Activated T-helper 1 cell treated with anti-CD3 and anti-CD28 coated beads, Interleukin-12 subunit alpha, Interleukin-12 subunit beta, Interleukin-2, Interleukin-4 antibody, amounts not matched to agents 30 ng/mL and 10 ng/mL and 1 ng/mL, durations not matched to agents 14 hours and 24 hours and 36 hours (primary cell): ENCODE measurements at regions of chr9 and their contacts with region 1.

Region 1: GRCh38 chr9:94166237-94166963 is 82.1 kb downstream of the PTPDC1 start:
- DNase-seq: peak; percentile 92
- H3K4me3 Mint-ChIP-seq: peak overlapping the region; percentile 95
- H3K27ac Mint-ChIP-seq: peak overlapping the region; percentile 89
- H3K4me1 Mint-ChIP-seq: peaks cover 46% of the 10 kb centered on the region
- H3K27me3 Mint-ChIP-seq: peaks cover 2% of the 10 kb centered on the region

Region 2: DNA sequence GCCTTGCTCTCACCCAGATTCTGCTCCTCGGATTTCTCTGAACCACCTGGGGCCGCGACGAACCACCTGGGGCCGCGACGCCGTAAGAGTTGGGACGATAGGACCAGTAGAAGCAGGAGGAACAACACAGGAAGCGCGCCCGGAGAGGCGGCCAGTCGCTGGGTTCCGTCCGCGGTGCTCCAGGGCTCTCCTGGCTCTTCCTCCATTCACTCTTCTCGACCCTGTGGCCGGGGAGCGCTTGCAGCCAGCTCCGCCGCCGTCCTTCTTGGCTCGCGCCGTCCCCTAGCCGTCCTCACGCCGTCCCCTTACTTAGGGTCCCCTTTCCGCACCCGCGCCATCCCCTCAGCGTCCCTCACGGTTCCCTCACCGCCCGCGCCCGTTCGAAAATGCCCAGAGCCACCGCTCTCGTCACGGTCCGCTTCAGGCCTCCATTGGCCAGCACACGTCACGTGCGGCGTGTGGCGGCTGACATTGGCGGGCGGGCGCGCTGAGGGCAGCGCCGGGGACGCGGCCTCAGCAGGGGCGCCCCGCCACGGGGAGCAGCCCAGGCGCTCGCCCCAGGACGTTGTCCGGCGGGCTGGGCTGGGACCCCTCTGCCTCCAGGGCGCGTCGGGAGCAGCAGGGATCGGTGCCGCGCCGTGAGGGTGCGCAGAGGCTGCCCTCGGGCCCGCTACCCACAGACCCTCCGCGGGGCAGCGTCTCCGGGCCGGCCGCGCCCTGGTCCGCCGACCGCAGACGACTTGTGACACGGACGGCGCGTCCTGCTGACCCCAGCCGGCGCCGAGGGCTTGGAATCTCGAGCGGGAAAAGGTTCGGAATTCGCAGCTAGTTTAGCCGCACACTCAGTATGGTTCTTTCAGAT is 135.9 kb before region 1 on chr9:
- intact Hi-C with region 1: loop called (anchors 1 kb)
- DNase-seq: peak; percentile 79
- H3K4me3 Mint-ChIP-seq: peak overlapping the region; percentile 99
- H3K27ac Mint-ChIP-seq: peak overlapping the region; percentile 96
- H3K4me1 Mint-ChIP-seq: peaks cover 21% of the 10 kb centered on the region
- H3K27me3 Mint-ChIP-seq: peaks cover 7% of the 10 kb centered on the region

Region 3: DNA sequence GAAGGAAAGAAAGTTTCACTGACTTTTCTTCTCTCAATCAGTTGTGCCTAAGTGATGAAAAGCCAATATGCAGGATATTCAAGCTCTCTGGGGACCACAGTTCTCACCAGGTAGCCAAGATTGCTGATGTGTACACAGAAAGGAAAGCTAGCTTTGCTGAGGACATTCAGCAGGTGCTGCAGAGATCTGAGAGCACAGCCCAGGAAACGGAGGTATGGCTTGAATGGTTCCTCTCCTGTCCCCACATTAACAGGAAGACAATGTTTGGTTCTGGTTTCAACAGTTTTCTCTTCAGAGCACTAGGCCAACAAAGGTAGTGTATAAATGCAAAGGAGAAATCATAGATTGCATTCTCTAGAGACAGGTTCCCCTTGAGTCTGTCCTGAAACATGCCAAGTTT is 12.5 kb before region 1 on chr9:
- intact Hi-C with region 1: no loop called
- DNase-seq: no peak
- H3K4me3 Mint-ChIP-seq: no peak overlapping the region
- H3K27ac Mint-ChIP-seq: no peak overlapping the region
- H3K4me1 Mint-ChIP-seq: peaks cover 12% of the 10 kb centered on the region
- H3K27me3 Mint-ChIP-seq: no peaks in the 10 kb centered on the region

Region 4: DNA sequence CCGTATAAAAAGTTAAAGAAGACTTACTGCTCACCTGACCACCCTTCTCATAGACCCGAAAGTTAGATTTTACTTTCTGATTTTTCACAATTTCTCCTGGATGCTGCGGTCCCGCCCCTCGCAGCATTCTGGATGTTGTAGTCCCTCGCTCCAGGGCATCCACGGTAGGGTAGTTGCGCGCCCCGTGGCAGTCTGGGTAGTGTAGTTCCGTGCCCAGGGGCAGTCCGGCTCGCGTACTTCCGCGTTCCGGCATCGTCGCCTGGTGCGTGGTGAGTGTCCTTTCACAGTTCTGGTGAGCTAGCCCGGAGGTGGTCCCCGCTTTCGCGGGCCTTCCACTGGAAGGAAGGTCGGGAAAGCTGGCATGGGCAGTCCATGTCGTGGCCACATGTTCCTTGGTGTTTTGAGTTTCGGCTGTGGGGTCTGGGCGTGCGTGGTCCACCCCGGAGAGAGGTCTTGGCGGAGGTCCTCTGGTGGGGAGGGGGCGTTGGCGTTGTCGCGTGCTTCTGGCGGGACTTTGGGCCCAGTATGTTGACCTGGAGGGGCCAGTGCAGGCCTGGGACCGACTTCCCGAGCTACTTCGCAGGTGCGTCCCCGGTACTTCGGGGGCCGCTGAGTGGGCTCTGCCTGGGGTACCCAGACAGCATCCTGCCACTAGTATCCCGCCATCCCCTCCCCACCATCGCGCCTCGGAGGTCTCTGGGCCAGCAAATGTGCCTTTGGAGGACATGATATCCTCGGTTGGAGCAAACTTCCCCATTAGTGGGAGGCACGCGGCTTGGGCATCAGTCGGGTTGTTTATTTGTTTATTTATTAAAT is 92.9 kb after region 1 on chr9 and contains the start of gene ZNF169:
- intact Hi-C with region 1: loop called (anchors 1 kb)
- DNase-seq: peak; percentile 85
- H3K4me3 Mint-ChIP-seq: peak within 1 kb of the TSS; percentile 100
- H3K27ac Mint-ChIP-seq: peak within 1 kb of the TSS; percentile 99
- H3K4me1 Mint-ChIP-seq: peaks cover 36% of the 10 kb centered on the region
- H3K27me3 Mint-ChIP-seq: peaks cover 10% of the 10 kb centered on the region
- total RNA-seq, gene ZNF169: 9.3 and 9.9 TPM in 2 replicates